Activated naive CD4-positive, alpha-beta T cell treated with anti-CD3 and anti-CD28 coated beads for 36 hours (primary cell): ENCODE measurements at regions of chr17 and their contacts with region 1.

Region 1: GRCh38 chr17:38982858-38983746 is 15.9 kb upstream of the FBXO47 start:
- DNase-seq: peak; percentile 66
- H3K4me3 Mint-ChIP-seq: no peak overlapping the region
- H3K27ac Mint-ChIP-seq: no peak overlapping the region
- H3K4me1 Mint-ChIP-seq: no peaks in the 10 kb centered on the region
- H3K27me3 Mint-ChIP-seq: no peaks in the 10 kb centered on the region

Region 2: GRCh38 chr17:38777641-38778250 is 205.4 kb before region 1 on chr17:
- CTCF ChIA-PET with region 1: no interaction called
- intact Hi-C with region 1: no loop called
- DNase-seq: no peak
- H3K4me3 Mint-ChIP-seq: no peak overlapping the region
- H3K27ac Mint-ChIP-seq: no peak overlapping the region
- H3K4me1 Mint-ChIP-seq: no peaks in the 10 kb centered on the region
- H3K27me3 Mint-ChIP-seq: no peaks in the 10 kb centered on the region

Region 3: DNA sequence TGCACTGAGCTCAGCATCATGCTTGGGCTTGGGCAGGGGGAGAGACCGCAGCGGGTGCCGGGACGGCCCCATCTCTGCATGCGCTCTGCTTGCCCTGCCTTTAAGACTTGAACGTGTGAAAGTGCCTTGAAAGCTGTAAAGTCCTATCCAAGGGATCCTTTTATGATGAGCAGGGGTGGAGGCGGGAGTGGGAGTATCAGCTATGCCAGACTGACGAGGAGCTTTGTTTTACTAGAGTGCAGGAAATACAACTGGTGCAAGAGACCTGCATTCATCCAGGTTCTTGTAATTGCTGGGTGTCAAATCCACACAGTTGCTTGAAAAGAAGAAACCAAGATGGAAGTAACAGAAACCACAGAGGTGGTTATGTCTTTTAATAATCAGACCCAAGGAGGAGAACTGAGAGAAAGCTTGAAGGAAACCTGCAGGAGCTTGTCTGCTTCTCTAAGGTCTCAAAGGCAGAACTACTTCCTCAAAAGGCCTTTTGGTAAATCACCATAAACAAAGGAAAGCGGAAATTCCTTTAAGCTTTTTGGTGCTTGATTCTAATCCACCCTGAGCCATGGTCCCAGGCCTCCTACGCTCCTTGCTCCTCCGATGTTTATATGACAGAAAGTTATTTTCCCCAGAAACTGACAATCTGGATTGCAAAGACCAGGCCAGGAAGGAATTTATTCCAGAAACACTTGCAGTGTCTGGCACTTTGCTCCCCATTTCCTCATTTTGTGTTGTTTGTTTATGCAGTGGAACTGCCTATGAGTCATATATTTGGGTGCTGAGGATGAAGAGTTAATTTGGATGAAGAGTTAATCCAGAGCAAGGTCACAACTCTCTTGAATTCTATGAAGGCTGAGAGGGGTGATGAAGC is 35.4 kb after region 1 on chr17:
- CTCF ChIA-PET with region 1: interaction called, 37 read pairs
- intact Hi-C with region 1: no loop called
- DNase-seq: peak; percentile 74
- H3K4me3 Mint-ChIP-seq: no peak overlapping the region
- H3K27ac Mint-ChIP-seq: peak overlapping the region; percentile 72
- H3K4me1 Mint-ChIP-seq: peaks cover 28% of the 10 kb centered on the region
- H3K27me3 Mint-ChIP-seq: no peaks in the 10 kb centered on the region

Region 4: DNA sequence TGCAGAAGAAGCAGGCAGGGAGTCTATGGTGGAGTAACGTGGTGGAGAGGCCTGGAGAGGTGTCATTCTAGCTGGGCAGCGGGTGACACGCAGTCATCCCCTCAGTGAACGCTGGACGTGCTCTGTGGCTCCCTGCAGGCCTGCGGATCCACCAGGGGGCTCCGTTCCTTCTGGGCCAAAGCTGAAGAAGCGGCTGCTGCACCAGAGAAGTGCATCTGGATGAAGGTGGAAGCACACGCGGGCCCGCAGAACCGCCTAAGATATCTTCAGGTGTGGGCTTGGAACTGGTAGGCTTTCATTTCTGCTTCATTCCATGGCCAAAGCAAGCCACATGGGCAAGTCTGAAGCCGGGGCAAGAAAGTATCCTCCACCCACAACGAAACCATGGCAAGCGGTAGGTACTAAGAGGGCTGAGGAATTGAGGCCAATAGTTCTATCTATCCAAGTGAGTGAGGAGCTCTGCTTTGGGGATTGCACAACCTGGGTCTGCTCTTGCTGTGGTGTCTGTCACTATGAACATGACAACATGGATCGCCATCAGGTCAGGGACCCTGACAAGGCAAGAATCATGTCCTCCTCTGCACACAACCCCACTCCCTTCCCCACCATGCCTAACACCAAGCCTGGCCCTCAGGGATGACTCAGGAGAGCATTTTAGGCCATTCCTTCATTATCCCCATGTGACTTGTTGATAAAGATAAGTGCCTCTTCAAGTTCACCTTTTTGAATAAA is 63.0 kb after region 1 on chr17:
- CTCF ChIA-PET with region 1: interaction called, 7 read pairs
- intact Hi-C with region 1: loop called (anchors 5 kb)
- DNase-seq: no peak
- H3K4me3 Mint-ChIP-seq: no peak overlapping the region
- H3K27ac Mint-ChIP-seq: peak overlapping the region; percentile 89
- H3K4me1 Mint-ChIP-seq: no peaks in the 10 kb centered on the region
- H3K27me3 Mint-ChIP-seq: no peaks in the 10 kb centered on the region

Region 5: DNA sequence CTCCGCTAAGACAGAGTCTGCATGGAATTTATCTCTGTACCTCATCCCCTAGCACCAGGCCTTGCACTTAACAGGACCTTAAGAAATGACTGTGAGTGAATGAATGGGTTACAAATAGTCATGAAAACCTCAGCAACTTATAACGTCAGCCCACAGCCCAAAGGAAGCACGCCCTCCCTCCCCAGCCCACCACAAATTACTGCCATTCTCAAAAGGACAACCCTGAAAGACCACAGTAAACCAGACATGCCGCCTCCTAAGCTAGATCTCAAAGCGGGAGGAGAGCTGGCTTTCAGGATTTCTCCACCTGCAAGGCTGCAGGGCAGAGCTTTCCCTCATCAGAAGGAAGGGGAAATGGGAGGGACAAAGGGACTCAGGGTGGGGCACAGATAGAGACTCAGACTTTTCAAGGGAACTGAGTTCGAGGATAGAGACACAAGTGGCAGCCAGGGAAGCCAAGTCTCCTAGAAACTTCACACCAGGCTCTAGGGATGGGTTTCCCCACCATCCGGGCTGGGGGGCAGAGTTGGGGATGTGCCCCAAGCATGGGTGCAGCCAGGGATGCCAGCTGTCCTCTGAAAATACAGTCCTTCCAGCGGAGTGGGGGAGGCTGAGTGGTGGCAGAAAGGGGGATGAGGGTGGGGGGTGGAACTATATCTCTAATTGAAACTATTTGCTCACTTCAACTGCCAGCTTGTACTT is 111.7 kb after region 1 on chr17:
- CTCF ChIA-PET with region 1: interaction called, 5 read pairs
- intact Hi-C with region 1: loop called (anchors 1 kb)
- DNase-seq: no peak
- H3K4me3 Mint-ChIP-seq: no peak overlapping the region
- H3K27ac Mint-ChIP-seq: peak overlapping the region; percentile 47
- H3K4me1 Mint-ChIP-seq: peaks cover 74% of the 10 kb centered on the region
- H3K27me3 Mint-ChIP-seq: no peaks in the 10 kb centered on the region

Region 6: GRCh38 chr17:39164675-39165143 is 181.6 kb after region 1 on chr17:
- CTCF ChIA-PET with region 1: interaction called, 30 read pairs
- intact Hi-C with region 1: no loop called
- DNase-seq: peak; percentile 83
- H3K4me3 Mint-ChIP-seq: peak overlapping the region; percentile 90
- H3K27ac Mint-ChIP-seq: no peak overlapping the region
- H3K4me1 Mint-ChIP-seq: peaks cover 16% of the 10 kb centered on the region
- H3K27me3 Mint-ChIP-seq: peaks cover 23% of the 10 kb centered on the region

Region 7: GRCh38 chr17:39235555-39236449 is 252.7 kb after region 1 on chr17:
- CTCF ChIA-PET with region 1: interaction called, 13 read pairs
- intact Hi-C with region 1: loop called (anchors 5 kb)
- DNase-seq: peak; percentile 76
- H3K4me3 Mint-ChIP-seq: no peak overlapping the region
- H3K27ac Mint-ChIP-seq: no peak overlapping the region
- H3K4me1 Mint-ChIP-seq: peaks cover 34% of the 10 kb centered on the region
- H3K27me3 Mint-ChIP-seq: peaks cover 2% of the 10 kb centered on the region